CD4-positive, alpha-beta memory T cell (primary cell): ENCODE measurements at regions of chr11 and their contacts with region 1.

Region 1: GRCh38 chr11:93784152-93784934 is at the start of gene MED17:
- DNase-seq: peak; percentile 84 to 91 (median 85)
- H3K4me3 ChIP-seq: peak within 1 kb of the TSS; percentile 93 to 94
- H3K4me3 Mint-ChIP-seq: peak within 1 kb of the TSS; percentile 93 to 100 (median 98)
- H3K27ac ChIP-seq: peak within 1 kb of the TSS; percentile 84
- H3K27ac Mint-ChIP-seq: peak within 1 kb of the TSS; percentile 68 to 99 (median 97)
- H3K4me1 ChIP-seq: peaks cover 37% of the 10 kb centered on the region
- H3K4me1 Mint-ChIP-seq: peaks cover 27 to 45% (median 36%) of the 10 kb centered on the region in 4 donors
- H3K27me3 ChIP-seq: no peaks in the 10 kb centered on the region
- H3K27me3 Mint-ChIP-seq: no peaks in the 10 kb centered on the region
- total RNA-seq, gene MED17: 73.2 to 78.5 TPM

Region 2: DNA sequence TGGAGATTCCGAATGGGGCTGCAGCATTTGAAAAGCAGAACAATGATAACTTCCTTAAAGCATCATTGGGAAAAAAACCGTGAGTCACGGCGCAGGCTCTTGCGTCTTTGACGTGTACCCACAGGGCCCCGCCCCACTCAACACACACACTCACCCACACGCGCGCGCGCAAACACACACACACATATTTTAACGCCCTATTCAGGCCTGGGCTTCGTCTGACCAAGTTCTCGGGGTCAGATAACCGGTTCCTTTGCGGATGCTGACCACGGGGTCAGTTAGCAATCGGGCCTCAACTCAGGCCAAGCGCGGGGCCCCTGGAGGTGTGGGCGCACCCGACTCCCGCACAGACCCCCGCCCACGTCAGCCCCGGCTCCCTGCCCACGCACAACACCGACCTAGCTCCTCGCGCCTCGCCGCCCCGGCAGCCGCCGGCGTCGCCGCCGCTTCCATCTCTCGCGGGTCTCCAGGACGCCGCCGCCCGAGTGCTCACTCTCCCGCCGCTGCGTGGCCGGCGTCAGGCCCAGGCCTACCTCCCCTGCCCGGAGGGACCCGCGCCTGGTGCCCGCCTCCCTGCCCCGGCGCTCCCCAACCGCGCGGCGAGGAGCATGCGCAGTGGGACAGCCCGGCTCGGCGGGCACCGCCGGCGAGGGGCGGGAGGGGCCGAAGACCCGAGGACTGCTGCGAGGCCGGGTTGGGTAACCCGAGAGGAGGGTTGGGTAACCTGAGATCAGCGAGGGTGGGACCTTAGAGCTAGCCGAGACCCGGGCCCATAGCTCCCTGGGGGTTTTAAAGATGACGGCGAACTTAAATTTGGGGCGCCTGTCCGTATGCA is 586.7 kb before region 1 on chr11 and contains the start of gene SLC36A4:
- CTCF ChIA-PET with region 1: no interaction called
- POLR2A ChIA-PET with region 1: interaction called, 8 read pairs
- intact Hi-C with region 1: loop called (anchors 1 kb)
- DNase-seq: peak; percentile 86 to 90 (median 88)
- H3K4me3 ChIP-seq: peak within 1 kb of the TSS; percentile 59 to 61
- H3K4me3 Mint-ChIP-seq: peak within 1 kb of the TSS; percentile 92 to 99 (median 96)
- H3K27ac ChIP-seq: peak within 1 kb of the TSS; percentile 92
- H3K27ac Mint-ChIP-seq: peak within 1 kb of the TSS; percentile 96 to 99 (median 98)
- H3K4me1 ChIP-seq: no peaks in the 10 kb centered on the region
- H3K4me1 Mint-ChIP-seq: peaks cover 15 to 34% (median 23%) of the 10 kb centered on the region in 4 donors
- H3K27me3 ChIP-seq: no peaks in the 10 kb centered on the region
- H3K27me3 Mint-ChIP-seq: peaks cover 0 to 3% of the 10 kb centered on the region in 2 donors
- total RNA-seq, gene SLC36A4: 15.4 to 21.5 TPM

Region 3: DNA sequence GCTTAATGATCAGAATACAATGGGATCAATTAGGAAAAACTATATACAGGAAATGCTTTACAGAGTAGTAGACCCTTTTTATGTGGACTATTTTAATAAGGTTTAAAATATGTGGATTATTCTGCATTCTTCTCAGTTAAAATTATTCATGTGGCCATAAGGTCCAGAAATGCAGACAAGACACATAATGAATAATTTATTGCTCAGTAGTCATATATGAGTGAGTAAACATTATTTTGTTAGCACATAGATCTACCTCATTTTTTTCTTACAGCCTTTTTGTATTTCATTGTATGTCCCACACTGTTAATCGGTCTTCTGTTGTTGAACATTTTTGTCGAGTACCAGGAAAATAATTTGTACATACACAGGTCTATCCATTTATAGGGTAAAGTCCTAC is 20.5 kb after region 1 on chr11:
- CTCF ChIA-PET with region 1: no interaction called
- POLR2A ChIA-PET with region 1: no interaction called
- intact Hi-C with region 1: no loop called
- DNase-seq: no peak
- H3K4me3 ChIP-seq: no peak overlapping the region
- H3K4me3 Mint-ChIP-seq: no peak overlapping the region
- H3K27ac ChIP-seq: no peak overlapping the region
- H3K27ac Mint-ChIP-seq: peak overlapping the region in 2 of 7 donors; percentile 22 to 43
- H3K4me1 ChIP-seq: no peaks in the 10 kb centered on the region
- H3K4me1 Mint-ChIP-seq: peaks cover 0 to 6% (median under 1%) of the 10 kb centered on the region in 4 donors
- H3K27me3 ChIP-seq: no peaks in the 10 kb centered on the region
- H3K27me3 Mint-ChIP-seq: no peaks in the 10 kb centered on the region